T-cell (primary cell): ENCODE measurements at regions of chr3 and their contacts with region 1.

Region 1: GRCh38 chr3:101849051-101849720 is at the start of gene NFKBIZ:
- DNase-seq: peak; percentile 84 to 97 (median 94)
- ATAC-seq: peak; percentile 79 to 83 (median 80)
- H3K4me3 ChIP-seq: peak within 1 kb of the TSS; percentile 84 to 89
- H3K4me3 Mint-ChIP-seq: peak within 1 kb of the TSS; percentile 98 to 100 (median 99)
- H3K27ac ChIP-seq: peak within 1 kb of the TSS; percentile 99
- H3K27ac Mint-ChIP-seq: peak within 1 kb of the TSS; percentile 99 to 100
- H3K4me1 ChIP-seq: peaks cover 12 to 21% of the 10 kb centered on the region in 2 experiments
- H3K4me1 Mint-ChIP-seq: peaks cover 44 to 45% (median 44%) of the 10 kb centered on the region in 3 donors
- H3K27me3 ChIP-seq: no peaks in the 10 kb centered on the region
- H3K27me3 Mint-ChIP-seq: no peaks in the 10 kb centered on the region
- total RNA-seq, gene NFKBIZ: 130 to 720 (median 132) TPM

Region 2: GRCh38 chr3:101827211-101828174 is 21.7 kb before region 1 on chr3:
- CTCF ChIA-PET with region 1: interaction called, 3 to 8 read pairs
- POLR2A ChIA-PET with region 1: interaction called, 8 to 34 read pairs
- DNase-seq: peak; percentile 51 to 87 (median 78)
- ATAC-seq: peak; percentile 81 to 87 (median 86)
- H3K4me3 ChIP-seq: peak overlapping the region; percentile 57 to 81
- H3K4me3 Mint-ChIP-seq: peak overlapping the region; percentile 90 to 92 (median 91)
- H3K27ac ChIP-seq: peak overlapping the region; percentile 91
- H3K27ac Mint-ChIP-seq: peak overlapping the region; percentile 98 to 99
- H3K4me1 ChIP-seq: peaks cover 19 to 21% of the 10 kb centered on the region in 2 experiments
- H3K4me1 Mint-ChIP-seq: peaks cover 56 to 70% (median 69%) of the 10 kb centered on the region in 3 donors
- H3K27me3 ChIP-seq: no peaks in the 10 kb centered on the region
- H3K27me3 Mint-ChIP-seq: no peaks in the 10 kb centered on the region

Region 3: DNA sequence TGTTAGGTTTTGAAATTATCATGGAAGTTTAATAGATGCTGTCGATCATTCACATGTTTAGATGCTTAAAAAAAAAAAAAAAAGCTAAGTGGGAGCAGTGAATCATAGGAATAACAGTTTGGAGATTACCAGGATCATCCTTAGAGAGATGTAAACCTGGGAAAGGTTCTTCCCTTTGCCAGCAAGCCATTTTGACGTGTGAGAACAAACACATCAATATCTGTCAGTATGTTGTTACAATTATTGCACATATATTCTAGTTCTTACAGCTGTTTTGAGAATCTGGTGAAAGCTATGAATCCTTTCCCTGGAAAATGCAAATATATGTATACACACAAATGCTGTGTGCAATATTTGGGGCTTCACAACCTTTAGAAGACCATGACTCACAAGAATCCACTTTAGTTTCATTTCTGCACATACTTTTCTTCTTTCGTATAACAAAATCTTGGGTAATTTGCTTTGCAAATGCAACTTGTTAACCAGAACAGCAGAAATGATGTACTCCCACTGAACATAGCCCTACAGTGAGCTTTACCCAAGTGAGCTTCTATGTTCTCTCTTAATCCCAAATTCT is 12.1 kb after region 1 on chr3:
- CTCF ChIA-PET with region 1: interaction called in 1 of 2 experiments, 3 read pairs
- POLR2A ChIA-PET with region 1: interaction called, 16 to 20 read pairs
- DNase-seq: no peak
- ATAC-seq: peak in 2 of 4 experiments; percentile 9 to 15
- H3K4me3 ChIP-seq: no peak overlapping the region
- H3K4me3 Mint-ChIP-seq: no peak overlapping the region
- H3K27ac ChIP-seq: no peak overlapping the region
- H3K27ac Mint-ChIP-seq: peak overlapping the region; percentile 24 to 25
- H3K4me1 ChIP-seq: peaks cover 0 to 4% of the 10 kb centered on the region in 2 experiments
- H3K4me1 Mint-ChIP-seq: peaks cover 36 to 40% (median 37%) of the 10 kb centered on the region in 3 donors
- H3K27me3 ChIP-seq: no peaks in the 10 kb centered on the region
- H3K27me3 Mint-ChIP-seq: no peaks in the 10 kb centered on the region

Region 4: DNA sequence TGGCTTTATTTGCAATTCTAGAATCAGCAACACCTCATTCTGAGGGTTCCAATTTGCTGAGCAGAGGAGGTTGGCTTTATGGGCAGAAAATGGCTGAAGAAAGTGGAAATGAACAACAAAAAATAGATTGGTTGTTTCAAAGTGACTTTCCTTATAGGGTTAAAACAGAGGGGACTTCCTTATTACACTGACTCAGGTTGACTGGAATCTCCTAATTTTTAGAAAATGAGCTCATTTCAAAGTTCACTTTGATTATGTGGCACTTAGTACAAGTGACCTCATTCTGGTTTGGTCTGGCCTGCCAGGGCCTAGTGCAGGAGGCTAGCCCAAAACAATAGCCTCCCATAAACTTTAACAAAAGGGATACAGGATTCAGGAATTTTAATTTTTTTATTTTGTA is 41.5 kb after region 1 on chr3:
- CTCF ChIA-PET with region 1: no interaction called
- POLR2A ChIA-PET with region 1: no interaction called
- DNase-seq: no peak
- ATAC-seq: no peak
- H3K4me3 ChIP-seq: no peak overlapping the region
- H3K4me3 Mint-ChIP-seq: no peak overlapping the region
- H3K27ac ChIP-seq: no peak overlapping the region
- H3K27ac Mint-ChIP-seq: no peak overlapping the region
- H3K4me1 ChIP-seq: no peaks in the 10 kb centered on the region
- H3K4me1 Mint-ChIP-seq: no peaks in the 10 kb centered on the region
- H3K27me3 ChIP-seq: no peaks in the 10 kb centered on the region
- H3K27me3 Mint-ChIP-seq: no peaks in the 10 kb centered on the region